Mammary epithelial cell (primary cell): ENCODE measurements at regions of chr2 and their contacts with region 1.

Region 1: GRCh38 chr2:20446917-20447436 is at the start of gene RHOB:
- DNase-seq: peak; percentile 97
- H3K4me3 ChIP-seq: peak within 1 kb of the TSS; percentile 64 to 81 (median 70)
- H3K27ac ChIP-seq: peak within 1 kb of the TSS; percentile 60
- H3K4me1 ChIP-seq: peaks cover 32% of the 10 kb centered on the region
- H3K27me3 ChIP-seq: no peaks in the 10 kb centered on the region
- CTCF ChIP-seq: no peak
- total RNA-seq, gene RHOB: 26.2 to 53.5 TPM

Region 2: DNA sequence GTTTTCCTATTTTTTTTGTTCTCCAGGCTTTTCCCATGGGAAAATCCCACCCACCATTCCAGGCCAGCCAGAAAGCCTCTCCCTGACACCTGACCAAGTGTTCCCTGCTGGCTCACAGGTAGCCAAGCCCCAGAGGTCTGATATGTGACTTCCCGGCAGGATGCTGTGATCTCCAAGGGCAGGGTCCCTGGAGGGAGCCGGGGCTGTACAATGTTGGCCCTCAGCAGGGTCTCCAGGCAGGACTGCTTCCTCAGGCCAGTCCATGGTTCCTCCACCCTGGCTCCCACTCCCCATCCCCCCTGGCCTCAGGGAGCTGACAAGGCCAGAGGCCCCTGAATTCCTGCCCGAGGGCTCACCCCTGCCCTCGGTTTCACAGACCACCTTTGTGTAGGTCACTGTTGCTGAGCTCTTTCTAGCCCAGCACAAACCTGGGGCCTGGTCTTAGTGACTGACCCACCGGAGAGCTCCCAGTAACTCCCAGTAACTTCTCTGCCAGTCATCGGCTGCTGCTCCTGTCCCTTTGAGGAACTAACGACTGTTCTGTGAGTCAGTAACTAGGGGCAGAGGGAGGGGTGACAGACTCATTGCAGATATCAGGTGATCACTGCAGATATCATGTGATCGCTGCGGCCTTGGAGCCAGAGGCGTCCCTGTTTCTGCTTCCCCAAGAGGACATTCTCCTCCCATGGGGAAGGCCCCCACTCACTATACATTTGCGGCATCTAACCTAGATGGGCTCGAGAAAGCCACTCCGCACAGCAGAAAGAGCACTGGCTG is 260.7 kb before region 1 on chr2:
- CTCF ChIA-PET with region 1: no interaction called
- dilution Hi-C with region 1: no loop called
- in situ Hi-C with region 1: no loop called
- intact Hi-C with region 1: no loop called
- DNase-seq: no peak
- H3K4me3 ChIP-seq: no peak overlapping the region
- H3K27ac ChIP-seq: no peak overlapping the region
- H3K4me1 ChIP-seq: peaks cover 42% of the 10 kb centered on the region
- H3K27me3 ChIP-seq: no peaks in the 10 kb centered on the region
- CTCF ChIP-seq: no peak

Region 3: DNA sequence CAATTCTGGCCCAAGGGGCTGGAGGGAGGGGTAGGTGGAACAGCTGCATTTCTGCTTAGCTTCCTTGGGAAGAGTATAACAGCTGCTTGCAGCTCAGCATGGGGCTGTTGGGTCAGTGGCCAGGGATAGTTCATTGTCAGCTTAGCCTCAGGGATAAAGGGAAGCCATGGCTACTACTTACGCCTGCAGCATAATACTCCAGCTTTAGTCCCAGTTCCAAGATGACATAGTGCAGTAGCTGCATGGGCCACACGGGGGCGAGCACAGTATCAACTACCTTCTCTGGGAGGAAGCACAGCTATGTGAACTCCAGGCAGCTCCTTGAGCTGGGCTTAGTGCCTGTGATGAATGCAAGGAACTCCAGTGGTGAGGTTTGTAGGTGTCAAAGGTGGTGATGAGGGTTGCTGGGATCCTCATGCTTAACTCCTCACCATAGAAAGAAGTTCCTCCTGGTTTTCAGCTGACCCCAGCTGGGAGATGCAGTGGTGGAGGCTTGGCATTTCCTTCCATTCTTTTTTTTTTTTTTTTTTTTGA is 35.5 kb before region 1 on chr2:
- CTCF ChIA-PET with region 1: no interaction called
- dilution Hi-C with region 1: no loop called
- in situ Hi-C with region 1: no loop called
- intact Hi-C with region 1: loop called (anchors 2 kb)
- DNase-seq: peak; percentile 72
- H3K4me3 ChIP-seq: no peak overlapping the region
- H3K27ac ChIP-seq: no peak overlapping the region
- H3K4me1 ChIP-seq: peaks cover 10% of the 10 kb centered on the region
- H3K27me3 ChIP-seq: no peaks in the 10 kb centered on the region
- CTCF ChIP-seq: peak; percentile 89 to 92

Region 4: DNA sequence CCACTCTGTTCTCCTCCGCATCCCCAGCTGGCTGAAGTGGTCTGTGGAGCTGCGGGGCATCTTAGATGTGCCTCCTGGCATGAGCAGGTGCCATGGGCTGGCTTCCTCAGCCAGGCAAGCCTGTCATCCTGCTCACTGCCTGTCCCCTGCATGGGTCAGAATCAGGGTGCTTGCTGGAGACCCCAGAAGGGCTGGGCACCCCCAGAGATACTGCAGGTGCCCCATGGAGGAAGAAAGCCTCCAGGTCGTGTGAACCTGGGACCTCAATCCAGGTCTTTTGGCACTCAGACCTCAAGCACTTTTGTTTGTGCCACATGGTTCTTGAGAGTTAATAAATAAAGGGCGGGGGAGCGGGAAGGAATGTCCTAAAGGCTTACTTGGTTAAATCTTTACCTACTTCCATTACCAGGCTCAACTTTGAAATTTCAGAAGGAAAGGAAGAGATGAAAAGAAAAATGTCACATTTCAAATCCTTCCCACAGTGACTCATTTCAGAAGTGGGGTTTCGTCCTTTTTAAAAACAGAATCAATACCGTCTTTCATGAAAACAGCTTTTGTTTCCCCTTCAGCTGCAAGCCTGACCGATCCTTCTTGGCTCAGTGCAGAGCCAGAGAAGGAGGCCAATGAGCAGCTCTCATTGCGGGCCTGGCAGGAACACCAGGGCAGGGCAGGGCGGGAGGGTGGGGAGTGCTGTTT is 69.8 kb after region 1 on chr2:
- CTCF ChIA-PET with region 1: no interaction called
- dilution Hi-C with region 1: loop called (anchors 5 kb)
- in situ Hi-C with region 1: no loop called
- intact Hi-C with region 1: no loop called
- DNase-seq: peak; percentile 59
- H3K4me3 ChIP-seq: no peak overlapping the region
- H3K27ac ChIP-seq: peak overlapping the region; percentile 40
- H3K4me1 ChIP-seq: peaks cover 31% of the 10 kb centered on the region
- H3K27me3 ChIP-seq: no peaks in the 10 kb centered on the region
- CTCF ChIP-seq: no peak

Region 5: GRCh38 chr2:20635675-20636584 is 189.0 kb after region 1 on chr2:
- CTCF ChIA-PET with region 1: interaction called, 5 read pairs
- dilution Hi-C with region 1: no loop called
- in situ Hi-C with region 1: loop called in 1 of 2 experiments (anchors 5 kb)
- intact Hi-C with region 1: loop called (anchors 1 kb)
- DNase-seq: peak; percentile 30
- H3K4me3 ChIP-seq: no peak overlapping the region
- H3K27ac ChIP-seq: no peak overlapping the region
- H3K4me1 ChIP-seq: peaks cover 23% of the 10 kb centered on the region
- H3K27me3 ChIP-seq: no peaks in the 10 kb centered on the region
- CTCF ChIP-seq: peak; percentile 94 to 96

Region 6: DNA sequence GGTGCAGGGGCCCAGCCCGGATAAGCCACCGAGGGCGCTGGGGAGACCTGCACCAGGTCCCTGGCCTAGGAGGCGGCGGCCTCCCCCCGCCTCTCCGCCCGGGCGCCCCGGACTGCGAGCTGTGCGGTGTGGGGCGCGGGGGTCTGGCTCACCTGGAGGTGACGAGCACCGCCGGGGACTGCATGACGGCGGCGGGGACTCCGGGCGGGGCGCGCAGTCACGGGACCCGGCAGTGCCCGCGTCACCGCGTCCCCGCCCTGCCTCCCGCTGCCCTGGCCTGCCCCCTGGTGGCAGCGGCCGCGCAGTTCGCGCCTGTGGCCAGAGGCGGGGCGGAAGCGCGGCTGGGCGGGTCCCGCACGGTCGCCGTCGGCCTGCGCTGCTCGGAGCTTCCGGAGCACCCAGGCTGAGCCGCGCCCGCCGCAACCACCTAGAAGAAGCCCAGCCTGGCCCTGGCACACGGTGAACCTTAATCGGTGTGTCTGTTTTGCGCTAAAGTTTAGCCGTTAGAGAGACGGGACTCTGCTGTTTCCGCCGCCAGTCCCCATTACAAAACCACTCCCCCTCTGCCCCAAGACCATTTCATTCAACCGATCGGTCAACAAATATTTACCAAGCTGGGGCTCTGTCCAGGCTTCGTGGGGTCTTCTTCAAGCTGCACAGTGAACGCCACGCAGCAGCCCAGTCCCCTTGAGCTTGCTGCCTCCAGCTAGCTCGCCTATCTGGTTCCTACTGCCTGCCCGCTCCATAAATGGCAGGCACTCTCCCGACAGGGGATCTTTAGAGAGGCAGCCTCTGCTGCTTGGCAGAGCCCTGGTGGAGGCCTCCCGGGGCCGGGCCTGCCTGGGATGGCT is 204.1 kb after region 1 on chr2 and contains the start of gene HS1BP3:
- CTCF ChIA-PET with region 1: interaction called, 5 read pairs
- dilution Hi-C with region 1: no loop called
- in situ Hi-C with region 1: no loop called
- intact Hi-C with region 1: loop called (anchors 1 kb)
- DNase-seq: peak; percentile 81
- H3K4me3 ChIP-seq: peak within 1 kb of the TSS; percentile 86 to 99 (median 91)
- H3K27ac ChIP-seq: peak within 1 kb of the TSS; percentile 92
- H3K4me1 ChIP-seq: peaks cover 17% of the 10 kb centered on the region
- H3K27me3 ChIP-seq: no peaks in the 10 kb centered on the region
- CTCF ChIP-seq: peak; percentile 65 to 70
- total RNA-seq, gene HS1BP3: 20.5 to 26.5 TPM